Activated T-helper 1 cell treated with anti-CD3 and anti-CD28 coated beads, Interleukin-12 subunit alpha, Interleukin-12 subunit beta, Interleukin-2, Interleukin-4 antibody, amounts not matched to agents 30 ng/mL and 10 ng/mL and 1 ng/mL, durations not matched to agents 14 hours and 24 hours and 36 hours (primary cell): ENCODE measurements at regions of chr5 and their contacts with region 1.

Region 1: DNA sequence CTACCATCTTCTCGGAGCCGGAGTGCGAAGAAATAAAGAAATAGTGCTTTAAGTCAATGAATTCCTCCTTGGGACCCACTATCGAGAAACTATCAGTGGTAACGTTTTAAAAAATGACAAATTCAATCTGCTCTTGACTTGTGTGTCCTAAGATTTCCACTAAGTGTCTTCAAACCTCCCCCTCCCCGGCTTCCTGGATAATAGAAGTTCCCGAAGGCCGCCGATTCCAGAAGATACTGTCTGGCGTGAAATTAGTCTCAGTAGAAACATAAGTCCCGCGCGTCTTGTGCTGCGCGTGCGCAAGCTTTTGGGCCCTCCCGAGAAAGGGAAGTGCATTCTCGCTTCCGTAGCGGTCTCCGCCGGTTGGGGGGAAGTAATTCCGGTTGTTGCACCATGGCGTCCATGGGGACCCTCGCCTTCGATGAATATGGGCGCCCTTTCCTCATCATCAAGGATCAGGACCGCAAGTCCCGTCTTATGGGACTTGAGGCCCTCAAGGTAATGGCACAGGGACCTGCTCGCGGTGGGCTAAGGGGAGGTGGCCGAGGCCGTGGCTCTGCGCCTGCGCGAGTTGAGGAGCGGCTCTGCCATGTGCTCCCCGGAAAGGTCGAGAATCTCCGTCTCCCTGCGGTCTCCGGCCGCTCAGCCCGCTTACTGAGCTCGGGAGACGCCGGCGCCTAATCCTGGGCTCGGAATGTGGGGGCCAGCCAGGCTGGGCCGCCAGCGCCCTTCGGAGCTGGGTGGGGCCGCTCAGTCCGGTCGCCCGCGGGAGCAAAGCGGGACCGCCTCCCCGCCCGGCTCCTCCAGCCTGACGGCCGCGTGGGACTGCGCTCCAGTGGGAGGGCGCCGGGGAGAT is at the start of gene CCT5:
- DNase-seq: peak; percentile 89
- H3K4me3 Mint-ChIP-seq: peak within 1 kb of the TSS; percentile 91
- H3K27ac Mint-ChIP-seq: peak within 1 kb of the TSS; percentile 100
- H3K4me1 Mint-ChIP-seq: peaks cover 53% of the 10 kb centered on the region
- H3K27me3 Mint-ChIP-seq: no peaks in the 10 kb centered on the region
- total RNA-seq, gene CCT5: 511 and 512 TPM in 2 replicates

Region 2: DNA sequence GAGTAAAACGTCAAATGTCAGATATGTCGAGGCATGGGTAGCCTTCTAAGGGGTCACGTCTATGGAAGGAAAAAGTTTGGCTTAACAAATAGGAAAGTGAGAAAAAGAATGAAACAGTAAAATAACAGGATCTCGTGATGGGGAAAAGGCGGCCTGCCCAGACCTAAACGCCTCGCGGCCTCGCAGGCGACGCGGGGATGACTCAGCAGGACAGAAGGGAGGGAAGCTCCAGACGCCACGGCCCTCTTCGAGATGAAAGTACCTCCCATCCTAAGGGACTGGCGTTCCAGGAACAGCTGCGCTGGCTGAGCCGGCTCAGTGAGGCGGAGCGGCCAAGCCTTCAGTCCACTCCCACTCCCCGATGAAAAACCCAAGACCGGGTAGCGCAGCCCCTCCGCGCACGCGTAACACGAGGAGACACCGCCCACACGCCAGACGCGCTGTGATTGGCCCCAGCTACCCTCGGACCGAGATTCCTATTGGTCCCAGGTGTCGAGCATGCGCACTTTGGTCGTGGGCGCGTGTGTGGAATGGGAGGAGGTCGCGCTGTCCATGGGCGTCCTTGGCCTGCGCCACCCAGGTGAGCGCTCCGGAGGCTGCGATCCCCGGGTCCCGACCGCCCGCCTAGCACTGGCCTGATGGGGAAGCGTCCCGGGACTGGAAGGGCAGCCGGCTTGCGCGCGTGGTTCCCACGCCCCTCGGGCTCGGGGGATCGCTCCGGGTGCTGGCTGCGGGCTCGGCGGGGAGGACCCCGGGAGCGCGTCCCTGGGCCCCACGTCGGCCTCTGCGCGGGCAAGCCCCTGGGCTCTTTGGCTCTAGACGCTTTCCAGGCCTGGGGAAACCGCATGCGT is 1792.8 kb before region 1 on chr5:
- intact Hi-C with region 1: loop called (anchors 10 kb)
- DNase-seq: peak; percentile 75
- H3K4me3 Mint-ChIP-seq: peak overlapping the region; percentile 85
- H3K27ac Mint-ChIP-seq: peak overlapping the region; percentile 59
- H3K4me1 Mint-ChIP-seq: peaks cover 6% of the 10 kb centered on the region
- H3K27me3 Mint-ChIP-seq: no peaks in the 10 kb centered on the region

Region 3: DNA sequence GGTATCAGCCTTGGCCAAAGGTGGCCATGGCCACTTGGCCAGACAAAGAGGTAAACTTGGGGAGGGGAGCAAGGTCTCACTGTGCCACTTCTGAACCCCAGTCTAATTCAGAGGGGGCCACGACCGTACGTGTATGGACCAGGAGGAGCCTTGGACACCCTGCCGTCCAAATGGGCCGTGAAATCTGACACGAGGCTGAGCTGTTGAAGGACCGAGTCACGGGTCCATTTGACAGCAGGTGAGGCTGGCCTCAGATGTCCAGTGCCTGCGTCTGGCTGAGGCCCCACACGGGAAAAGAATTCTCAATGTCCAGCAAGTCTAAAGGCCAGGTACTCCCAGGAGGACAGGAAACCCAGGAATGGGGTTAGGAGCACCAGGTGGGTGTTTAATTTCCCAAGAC is 39.8 kb after region 1 on chr5:
- intact Hi-C with region 1: no loop called
- DNase-seq: no peak
- H3K4me3 Mint-ChIP-seq: no peak overlapping the region
- H3K27ac Mint-ChIP-seq: no peak overlapping the region
- H3K4me1 Mint-ChIP-seq: no peaks in the 10 kb centered on the region
- H3K27me3 Mint-ChIP-seq: peaks cover 12% of the 10 kb centered on the region

Region 4: DNA sequence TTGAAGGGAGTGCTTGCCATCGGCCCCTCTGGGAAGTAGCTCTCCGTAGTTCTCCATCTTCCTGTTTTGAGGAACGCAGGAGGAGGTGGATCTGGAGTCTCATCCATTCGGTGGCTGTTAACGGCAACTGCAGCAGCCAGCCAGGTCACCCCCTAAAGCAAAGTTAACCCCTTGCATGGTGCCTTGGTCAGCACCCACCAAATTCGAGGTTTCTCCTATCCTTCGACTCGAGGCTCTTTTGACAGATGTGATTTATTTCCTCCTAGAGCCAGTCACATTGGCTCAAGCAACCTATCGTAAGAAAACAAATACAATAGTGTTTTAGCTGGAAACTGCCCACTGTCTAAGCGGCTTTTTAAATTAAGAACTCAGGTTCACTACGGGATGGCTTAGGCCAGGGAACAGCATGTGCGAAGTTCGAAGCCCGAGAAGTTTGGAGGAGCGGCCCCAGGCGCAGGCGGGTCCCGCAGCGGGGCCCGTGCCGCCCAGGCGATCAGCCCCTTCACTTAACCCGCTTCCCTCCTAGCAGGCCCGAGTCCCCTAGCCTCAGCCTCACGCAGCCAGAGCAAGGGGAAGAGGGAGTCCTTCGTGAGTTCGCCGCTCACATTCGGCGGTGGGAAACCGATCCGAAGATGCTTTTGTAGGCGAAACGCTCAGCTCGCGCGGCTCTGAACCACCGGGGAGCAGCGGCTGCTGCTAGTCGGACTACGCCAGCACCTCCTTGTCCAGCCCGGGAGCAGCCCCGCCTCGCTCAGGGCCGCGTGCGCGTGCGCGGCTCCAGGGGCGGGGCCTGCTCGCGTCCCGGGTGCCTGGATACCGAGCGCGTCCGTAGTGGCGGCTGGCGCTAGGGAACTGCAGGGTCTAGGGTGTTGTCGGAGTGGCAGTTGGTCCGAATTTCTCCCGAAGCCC is 191.2 kb after region 1 on chr5 and contains the start of gene ROPN1L:
- intact Hi-C with region 1: loop called (anchors 1 kb)
- DNase-seq: peak; percentile 80
- H3K4me3 Mint-ChIP-seq: peak within 1 kb of the TSS; percentile 85
- H3K27ac Mint-ChIP-seq: no peak within 1 kb of the TSS
- H3K4me1 Mint-ChIP-seq: peaks cover 35% of the 10 kb centered on the region
- H3K27me3 Mint-ChIP-seq: peaks cover 2% of the 10 kb centered on the region
- total RNA-seq, gene ROPN1L: 0.16 and 0.20 TPM in 2 replicates